Dorsolateral prefrontal cortex (tissue), 120 donors: ENCODE measurements at regions of chr16 and their contacts with region 1.

Region 1: DNA sequence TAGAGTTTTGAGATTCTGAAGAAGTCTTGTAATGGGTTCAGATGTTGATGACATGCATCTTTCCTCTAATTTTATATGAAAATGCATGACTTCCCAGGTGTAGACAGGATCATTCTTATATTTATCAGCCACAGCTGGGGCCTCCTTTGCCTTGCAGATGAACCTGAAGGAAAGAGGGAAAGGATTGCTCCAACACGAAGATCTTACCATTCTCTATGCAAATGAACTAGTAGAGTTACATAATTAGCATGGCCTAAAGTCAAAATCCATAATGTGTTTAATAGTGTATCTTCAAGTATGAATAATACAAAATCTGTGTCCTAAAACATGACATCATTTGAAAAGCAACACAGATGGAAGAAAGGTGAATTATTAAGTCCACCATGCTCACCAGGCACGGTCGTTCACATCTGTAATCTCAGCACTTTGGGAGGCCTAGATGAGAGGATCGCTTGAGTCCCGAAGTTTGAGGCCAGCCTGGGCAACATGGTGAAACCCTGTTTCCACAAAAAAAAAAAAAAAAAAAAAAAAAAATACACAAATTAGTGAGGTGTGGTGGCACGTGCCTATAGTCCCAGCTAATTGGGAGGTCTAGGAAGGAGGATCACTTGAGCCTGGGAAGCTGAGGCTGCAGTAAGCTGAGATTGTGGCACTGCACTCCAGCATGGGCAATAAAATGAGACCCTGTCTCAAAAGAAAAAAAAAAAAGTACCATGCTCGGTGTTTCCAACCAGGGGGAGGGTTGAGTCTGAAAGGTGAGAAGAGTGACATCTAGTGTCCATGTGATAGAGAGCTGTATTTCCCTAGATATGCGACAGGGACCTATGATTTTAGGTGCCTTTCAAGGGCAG is 6.3 kb downstream of the VWA3A start:
- DNase-seq: no peak
- H3K4me3 ChIP-seq: peak overlapping the region in 12 of 59 donors; percentile 14 to 34 (median 22)
- H3K27ac ChIP-seq: no peak overlapping the region
- H3K27me3 ChIP-seq: no peaks in the 10 kb centered on the region
- CTCF ChIP-seq: peak in 55 of 56 donors; percentile 26 to 71 (median 60)

Region 2: DNA sequence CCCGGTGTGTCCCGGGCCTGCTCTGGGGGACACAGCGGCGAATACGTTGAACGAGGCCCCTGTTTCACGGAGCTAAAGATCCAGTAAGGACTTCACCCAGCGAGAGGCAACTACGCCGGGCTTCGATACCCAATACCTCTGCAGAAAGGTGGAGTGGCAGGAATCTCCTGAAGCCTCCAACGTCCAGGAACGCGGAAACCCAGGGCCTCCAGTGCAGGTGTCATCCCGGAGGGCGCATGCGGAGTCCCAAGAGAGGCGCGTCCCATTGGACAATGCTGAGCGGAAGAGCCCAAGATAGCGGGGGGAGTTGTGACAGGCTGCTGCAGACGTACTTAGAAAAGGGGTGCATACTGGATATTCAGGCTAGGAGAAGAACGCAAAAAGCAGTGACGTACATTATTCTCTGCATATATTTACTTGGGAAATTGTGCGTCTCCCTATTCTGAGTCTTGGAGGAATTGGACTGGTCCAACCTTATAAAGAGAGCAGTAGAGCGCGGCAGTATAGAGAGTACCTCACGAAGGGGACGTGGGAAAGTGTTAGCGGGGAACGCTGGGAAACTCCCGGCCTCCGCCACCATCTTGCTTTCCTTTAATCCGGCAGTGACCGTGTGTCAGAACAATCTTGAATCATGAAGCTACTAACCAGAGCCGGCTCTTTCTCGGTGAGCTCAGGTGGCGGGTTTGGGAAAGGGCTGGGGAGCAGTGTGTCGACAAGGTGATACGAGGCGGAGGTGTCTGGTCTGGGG is 145.7 kb before region 1 on chr16 and contains the start of gene UQCRC2:
- intact Hi-C with region 1: loop called in 1 of 2 experiments (anchors 5 kb)
- DNase-seq: peak; percentile 85 to 96 (median 92)
- H3K4me3 ChIP-seq: peak within 1 kb of the TSS; percentile 67 to 100 (median 94)
- H3K27ac ChIP-seq: peak within 1 kb of the TSS; percentile 92 to 100 (median 98)
- H3K27me3 ChIP-seq: no peaks in the 10 kb centered on the region
- CTCF ChIP-seq: peak in 20 of 56 donors; percentile 2 to 42 (median 18)
- total RNA-seq, gene UQCRC2: 215 to 422 (median 323) TPM

Region 3: GRCh38 chr16:22001591-22001990 is 97.0 kb before region 1 on chr16:
- intact Hi-C with region 1: loop called (anchors 2 to 5 kb)
- DNase-seq: no peak
- H3K4me3 ChIP-seq: peak overlapping the region in 6 of 59 donors; percentile 37 to 54 (median 44)
- H3K27ac ChIP-seq: no peak overlapping the region
- H3K27me3 ChIP-seq: no peaks in the 10 kb centered on the region
- CTCF ChIP-seq: no peak

Region 4: DNA sequence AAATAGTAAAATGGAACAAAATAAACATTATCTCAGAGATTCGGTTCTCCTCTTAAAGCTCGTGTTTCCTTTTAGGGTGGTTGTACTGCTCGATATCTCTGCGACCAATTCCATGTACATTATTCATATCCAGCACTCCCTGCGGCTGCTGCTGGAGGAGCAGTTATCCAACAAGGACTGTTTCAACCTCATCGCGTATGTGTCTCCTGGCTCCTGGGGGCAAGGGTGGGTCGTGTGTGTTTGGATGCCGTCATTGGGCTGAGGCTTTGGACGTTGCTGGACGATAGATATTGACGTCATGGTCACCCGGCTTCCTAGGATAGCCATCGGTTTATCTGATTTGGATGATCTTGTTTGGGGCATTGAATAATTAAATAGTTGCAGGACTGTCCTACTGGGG is 27.5 kb after region 1 on chr16:
- intact Hi-C with region 1: no loop called
- DNase-seq: no peak
- H3K4me3 ChIP-seq: no peak overlapping the region
- H3K27ac ChIP-seq: no peak overlapping the region
- H3K27me3 ChIP-seq: no peaks in the 10 kb centered on the region
- CTCF ChIP-seq: no peak

Region 5: DNA sequence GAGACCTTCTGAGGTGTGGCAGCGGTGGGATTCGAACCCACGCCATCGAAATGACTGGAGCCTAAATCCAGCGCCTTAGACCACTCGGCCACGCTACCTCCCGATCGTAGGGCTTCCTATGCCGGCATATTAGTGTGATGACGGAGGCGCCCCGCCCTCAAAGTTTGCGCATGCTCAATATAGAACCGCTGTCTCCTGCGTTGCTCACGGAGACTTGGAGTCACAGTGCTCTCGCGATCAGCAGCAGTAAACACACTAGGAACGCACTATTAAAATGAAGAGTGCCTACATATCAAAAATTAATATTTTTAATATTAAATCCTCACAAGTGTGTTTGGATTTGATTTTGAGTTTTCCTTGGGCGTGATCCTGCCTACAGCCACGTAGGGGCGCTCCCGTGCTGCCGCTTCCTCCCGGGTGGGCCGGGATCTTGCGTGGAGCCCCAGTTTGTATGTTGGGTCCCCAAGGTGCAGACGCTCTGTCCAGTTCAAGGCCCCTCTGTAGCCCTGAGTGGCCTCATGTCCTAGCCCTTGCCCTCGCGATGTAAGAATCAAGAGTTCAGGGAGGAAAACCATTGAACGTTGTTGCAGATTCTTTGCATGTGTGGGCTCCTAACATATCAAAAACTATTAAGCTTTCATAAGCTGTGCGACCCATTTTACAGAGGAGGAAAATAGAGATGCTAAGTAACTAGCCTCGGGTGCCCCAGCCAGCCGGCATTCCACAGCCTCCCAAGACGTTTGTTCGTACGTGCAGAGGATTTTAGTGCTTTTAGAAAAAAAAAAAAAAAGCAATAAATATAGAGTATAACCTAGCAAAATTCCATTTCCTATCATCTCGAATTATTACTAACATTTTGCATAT is 97.3 kb after region 1 on chr16:
- intact Hi-C with region 1: no loop called
- DNase-seq: peak; percentile 87 to 97 (median 92)
- H3K4me3 ChIP-seq: peak overlapping the region; percentile 37 to 84 (median 67)
- H3K27ac ChIP-seq: peak overlapping the region; percentile 5 to 97 (median 89)
- H3K27me3 ChIP-seq: no peaks in the 10 kb centered on the region
- CTCF ChIP-seq: peak; percentile 54 to 99 (median 96)